ENCODE measurements at regions of chr7 and their contacts with region 1.

Region 1: DNA sequence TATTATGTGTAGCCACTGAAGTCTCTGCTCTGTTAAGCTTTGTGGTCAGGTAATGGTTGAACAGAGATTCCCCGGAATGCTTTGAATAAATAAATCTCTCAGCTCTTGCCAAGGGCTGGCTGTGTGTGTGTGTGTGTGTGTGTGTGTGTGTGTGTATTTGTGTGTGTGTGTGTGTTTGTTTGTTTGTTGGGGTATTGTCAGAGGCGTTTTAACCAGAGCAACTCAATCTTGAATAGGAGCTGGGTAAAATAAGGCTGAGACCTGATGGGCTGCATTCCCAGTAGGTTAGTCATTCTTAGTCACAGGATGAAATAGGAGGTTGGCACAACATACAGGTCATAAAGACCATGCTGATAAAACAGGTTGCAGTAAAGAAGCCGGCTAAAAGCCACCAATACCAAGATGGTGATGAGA is 256.2 kb upstream of the CACNA2D1 start:
- DNase-seq: peak; percentile 96
- ATAC-seq: peak; percentile 82
- H3K4me3 ChIP-seq: no peak overlapping the region
- H3K27ac ChIP-seq: peak overlapping the region; percentile 40; the same call in 1 of the 2 replicates
- H3K4me1 ChIP-seq: peaks cover 13% of the 10 kb centered on the region
- H3K27me3 ChIP-seq: no peaks in the 10 kb centered on the region
- CTCF ChIP-seq: no peak

Region 2: GRCh38 chr7:82624337-82624736 is 75.4 kb before region 1 on chr7:
- CTCF ChIA-PET with region 1: no interaction called
- POLR2A ChIA-PET with region 1: no interaction called
- intact Hi-C with region 1: loop called (anchors 2 kb)
- DNase-seq: peak; percentile 6
- ATAC-seq: peak; percentile 42
- H3K4me3 ChIP-seq: no peak overlapping the region
- H3K27ac ChIP-seq: no peak overlapping the region
- H3K4me1 ChIP-seq: no peaks in the 10 kb centered on the region
- H3K27me3 ChIP-seq: peaks cover 4% of the 10 kb centered on the region; the same call in 1 of the 2 replicates
- CTCF ChIP-seq: no peak

Region 3: GRCh38 chr7:82675396-82675795 is 24.4 kb before region 1 on chr7:
- CTCF ChIA-PET with region 1: no interaction called
- POLR2A ChIA-PET with region 1: no interaction called
- intact Hi-C with region 1: loop called (anchors 2 kb)
- DNase-seq: peak; percentile 65
- ATAC-seq: peak; percentile 95
- H3K4me3 ChIP-seq: no peak overlapping the region
- H3K27ac ChIP-seq: no peak overlapping the region
- H3K4me1 ChIP-seq: peaks cover 9% of the 10 kb centered on the region; the same call in 1 of the 2 replicates
- H3K27me3 ChIP-seq: no peaks in the 10 kb centered on the region
- CTCF ChIP-seq: no peak

Region 4: GRCh38 chr7:82722946-82723345 is 23.2 kb after region 1 on chr7:
- CTCF ChIA-PET with region 1: no interaction called
- POLR2A ChIA-PET with region 1: no interaction called
- intact Hi-C with region 1: loop called (anchors 2 kb)
- DNase-seq: no peak
- ATAC-seq: no peak
- H3K4me3 ChIP-seq: no peak overlapping the region
- H3K27ac ChIP-seq: no peak overlapping the region
- H3K4me1 ChIP-seq: no peaks in the 10 kb centered on the region
- H3K27me3 ChIP-seq: no peaks in the 10 kb centered on the region
- CTCF ChIP-seq: no peak